ENCODE measurements at regions of chr2 and their contacts with region 1.

Region 1: DNA sequence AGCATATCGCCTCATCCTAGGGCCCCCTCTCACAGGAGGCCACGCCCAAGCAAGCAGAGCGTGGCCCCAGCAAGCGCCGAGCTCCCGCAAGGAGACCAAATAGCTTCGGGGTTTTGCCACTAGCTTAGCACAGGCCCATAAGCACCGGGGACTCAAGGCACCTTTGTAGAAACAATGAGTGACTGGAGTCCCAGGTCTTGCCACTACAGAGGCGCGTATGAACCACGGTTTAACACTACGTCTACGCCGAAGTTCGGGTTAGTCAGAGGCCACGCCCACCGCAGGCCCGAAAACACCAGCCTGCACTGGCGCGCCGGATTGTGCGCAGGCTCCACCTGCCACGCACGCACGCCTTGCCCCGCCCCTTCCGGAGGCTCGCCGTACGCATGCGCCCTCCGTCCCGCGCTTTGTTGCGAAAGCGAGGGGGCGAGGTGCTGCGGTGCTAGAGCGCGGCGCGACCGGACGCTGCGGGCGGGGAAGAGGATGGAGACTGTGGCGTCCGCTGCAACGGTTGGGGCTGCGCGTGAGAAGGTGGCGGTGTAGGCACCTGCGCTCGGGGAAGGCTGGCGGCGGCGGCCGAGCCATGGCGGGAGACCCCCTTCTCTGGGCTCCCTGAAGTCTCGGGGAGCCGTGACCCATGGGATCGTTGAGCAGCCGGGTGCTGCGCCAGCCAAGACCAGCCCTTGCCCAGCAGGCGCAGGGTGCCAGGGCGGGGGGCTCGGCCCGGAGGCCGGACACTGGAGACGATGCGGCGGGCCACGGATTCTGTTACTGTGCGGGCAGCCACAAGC is at the start of gene GMCL1:
- DNase-seq: peak; percentile 97 to 100 (median 98)
- ATAC-seq: peak; percentile 93
- H3K4me3 ChIP-seq: peak within 1 kb of the TSS; percentile 74
- H3K4me3 Mint-ChIP-seq: peak within 1 kb of the TSS; percentile 99
- H3K27ac ChIP-seq: peak within 1 kb of the TSS; percentile 89 to 93
- H3K27ac Mint-ChIP-seq: peak within 1 kb of the TSS; percentile 99
- H3K4me1 ChIP-seq: peaks cover 33% of the 10 kb centered on the region
- H3K4me1 Mint-ChIP-seq: peaks cover 65% of the 10 kb centered on the region
- H3K27me3 ChIP-seq: no peaks in the 10 kb centered on the region
- H3K27me3 Mint-ChIP-seq: no peaks in the 10 kb centered on the region
- CTCF ChIP-seq: no peak
- total RNA-seq, gene GMCL1: 29.7 to 29.8 TPM

Region 2: GRCh38 chr2:69386789-69387734 is 442.4 kb before region 1 on chr2 and contains the start of gene GFPT1:
- CTCF ChIA-PET with region 1: no interaction called
- POLR2A ChIA-PET with region 1: no interaction called
- intact Hi-C with region 1: loop called in 1 of 2 experiments (anchors 5 kb)
- DNase-seq: peak; percentile 84 to 97 (median 92)
- ATAC-seq: peak; percentile 97
- H3K4me3 ChIP-seq: peak within 1 kb of the TSS; percentile 62
- H3K4me3 Mint-ChIP-seq: peak within 1 kb of the TSS; percentile 89
- H3K27ac ChIP-seq: peak within 1 kb of the TSS; percentile 39 to 58
- H3K27ac Mint-ChIP-seq: peak within 1 kb of the TSS; percentile 79
- H3K4me1 ChIP-seq: peaks cover 22% of the 10 kb centered on the region
- H3K4me1 Mint-ChIP-seq: peaks cover 48% of the 10 kb centered on the region
- H3K27me3 ChIP-seq: no peaks in the 10 kb centered on the region
- H3K27me3 Mint-ChIP-seq: no peaks in the 10 kb centered on the region
- CTCF ChIP-seq: no peak
- total RNA-seq, gene GFPT1: 17.6 to 18.3 TPM

Region 3: DNA sequence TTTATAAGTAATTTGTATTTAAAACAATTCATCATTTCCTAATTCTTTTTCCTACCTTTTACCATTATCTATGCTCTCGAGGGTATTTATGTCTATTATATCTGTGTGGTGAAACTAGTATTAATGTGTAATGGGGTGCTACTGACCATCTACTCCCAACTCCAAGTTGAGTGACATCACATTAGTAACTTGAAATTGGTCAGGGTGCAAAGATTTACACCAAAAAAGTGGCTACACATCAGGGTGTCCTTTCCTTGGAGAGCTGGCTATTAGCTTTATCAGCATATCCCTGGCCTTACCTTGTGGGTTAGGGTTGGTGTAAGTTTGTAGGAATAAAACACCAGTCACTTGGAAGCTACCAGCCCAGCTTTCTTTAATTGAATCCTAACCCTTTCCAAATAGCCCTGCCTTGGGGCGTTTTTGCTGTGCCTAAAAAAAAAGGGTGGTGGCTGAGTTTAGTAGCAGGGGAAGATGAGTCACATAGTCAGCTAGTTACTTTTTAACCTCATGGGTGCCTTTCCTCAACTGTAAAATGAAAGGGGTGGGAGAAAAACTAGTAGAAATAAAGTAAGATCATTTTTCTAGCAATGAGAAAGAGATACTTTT is 73.5 kb before region 1 on chr2:
- CTCF ChIA-PET with region 1: no interaction called
- POLR2A ChIA-PET with region 1: no interaction called
- intact Hi-C with region 1: no loop called
- DNase-seq: no peak
- ATAC-seq: no peak
- H3K4me3 ChIP-seq: no peak overlapping the region
- H3K4me3 Mint-ChIP-seq: no peak overlapping the region
- H3K27ac ChIP-seq: no peak overlapping the region
- H3K27ac Mint-ChIP-seq: no peak overlapping the region
- H3K4me1 ChIP-seq: peaks cover 3% of the 10 kb centered on the region
- H3K4me1 Mint-ChIP-seq: peaks cover 5% of the 10 kb centered on the region
- H3K27me3 ChIP-seq: no peaks in the 10 kb centered on the region
- H3K27me3 Mint-ChIP-seq: no peaks in the 10 kb centered on the region
- CTCF ChIP-seq: no peak

Region 4: GRCh38 chr2:69893684-69894551 is 64.5 kb after region 1 on chr2 and contains the start of gene SNRNP27:
- CTCF ChIA-PET with region 1: interaction called, 3 read pairs
- POLR2A ChIA-PET with region 1: interaction called, 4 read pairs
- intact Hi-C with region 1: loop called in 1 of 2 experiments (anchors 2 kb)
- DNase-seq: peak; percentile 74 to 90 (median 81)
- ATAC-seq: peak; percentile 93
- H3K4me3 ChIP-seq: peak within 1 kb of the TSS; percentile 84
- H3K4me3 Mint-ChIP-seq: peak within 1 kb of the TSS; percentile 100
- H3K27ac ChIP-seq: peak within 1 kb of the TSS; percentile 66 to 77
- H3K27ac Mint-ChIP-seq: peak within 1 kb of the TSS; percentile 99
- H3K4me1 ChIP-seq: peaks cover 19% of the 10 kb centered on the region
- H3K4me1 Mint-ChIP-seq: peaks cover 51% of the 10 kb centered on the region
- H3K27me3 ChIP-seq: no peaks in the 10 kb centered on the region
- H3K27me3 Mint-ChIP-seq: no peaks in the 10 kb centered on the region
- CTCF ChIP-seq: no peak
- total RNA-seq, gene SNRNP27: 50.9 to 54.8 TPM

Measured in CD4-positive, alpha-beta T cell (primary cell).